Vagina (tissue), 2 donors: ENCODE measurements at regions of chr16 and their contacts with region 1.

Region 1: DNA sequence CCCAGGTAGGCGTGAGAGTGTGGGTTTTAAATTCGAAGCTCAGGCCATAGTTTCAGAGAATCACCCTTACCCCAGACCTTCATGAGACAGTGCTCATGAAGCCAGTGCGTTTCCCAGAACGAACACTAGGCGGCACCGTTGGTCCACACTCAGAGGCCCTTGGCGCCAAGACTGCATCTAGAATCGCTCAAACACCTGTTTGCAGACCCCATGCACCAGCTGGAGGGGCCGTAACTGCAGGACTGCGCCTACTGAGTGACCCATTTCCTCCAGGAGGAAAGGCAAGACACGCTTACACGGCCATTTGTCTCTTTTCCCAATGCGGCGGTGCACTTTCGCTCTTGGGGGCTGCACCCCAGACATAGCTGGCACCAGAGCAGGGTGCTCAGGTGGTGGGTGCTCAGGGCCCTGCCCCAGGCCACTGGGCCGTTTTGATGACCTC is 34.0 kb downstream of the ADGRG5 start:
- DNase-seq: peak in 1 of 2 donors; percentile 64
- H3K4me3 ChIP-seq: no peak overlapping the region
- H3K27ac ChIP-seq: no peak overlapping the region
- H3K4me1 ChIP-seq: peaks cover 5% of the 10 kb centered on the region
- H3K27me3 ChIP-seq: no peaks in the 10 kb centered on the region
- CTCF ChIP-seq: peak; percentile 77 to 83 (median 80)
- POLR2A ChIP-seq: no peak

Region 2: GRCh38 chr16:57639172-57639887 is 62.9 kb after region 1 on chr16:
- intact Hi-C with region 1: no loop called
- DNase-seq: no peak
- H3K4me3 ChIP-seq: no peak overlapping the region
- H3K27ac ChIP-seq: peak overlapping the region; percentile 34
- H3K4me1 ChIP-seq: peaks cover 56% of the 10 kb centered on the region
- H3K27me3 ChIP-seq: no peaks in the 10 kb centered on the region
- CTCF ChIP-seq: no peak
- POLR2A ChIP-seq: no peak

Region 3: DNA sequence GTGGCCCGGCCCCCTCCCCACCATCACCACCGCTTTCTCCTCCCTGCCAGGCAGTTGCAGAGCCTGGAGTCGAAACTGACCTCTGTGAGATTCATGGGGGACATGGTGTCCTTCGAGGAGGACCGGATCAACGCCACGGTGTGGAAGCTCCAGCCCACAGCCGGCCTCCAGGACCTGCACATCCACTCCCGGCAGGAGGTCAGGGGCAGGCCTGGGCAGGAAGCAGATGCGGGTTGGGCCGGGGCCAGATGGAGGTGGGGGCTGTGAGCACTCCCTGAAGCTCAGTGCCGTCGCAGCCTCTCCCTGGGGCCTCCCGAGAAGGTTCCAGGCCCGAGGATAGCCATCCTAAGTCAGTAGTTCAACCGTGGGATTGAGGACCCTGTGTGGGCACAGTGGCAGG is 77.5 kb after region 1 on chr16:
- intact Hi-C with region 1: loop called (anchors 5 kb)
- DNase-seq: no peak
- H3K4me3 ChIP-seq: no peak overlapping the region
- H3K27ac ChIP-seq: no peak overlapping the region
- H3K4me1 ChIP-seq: peaks cover 4% of the 10 kb centered on the region
- H3K27me3 ChIP-seq: no peaks in the 10 kb centered on the region
- CTCF ChIP-seq: no peak
- POLR2A ChIP-seq: no peak

Region 4: DNA sequence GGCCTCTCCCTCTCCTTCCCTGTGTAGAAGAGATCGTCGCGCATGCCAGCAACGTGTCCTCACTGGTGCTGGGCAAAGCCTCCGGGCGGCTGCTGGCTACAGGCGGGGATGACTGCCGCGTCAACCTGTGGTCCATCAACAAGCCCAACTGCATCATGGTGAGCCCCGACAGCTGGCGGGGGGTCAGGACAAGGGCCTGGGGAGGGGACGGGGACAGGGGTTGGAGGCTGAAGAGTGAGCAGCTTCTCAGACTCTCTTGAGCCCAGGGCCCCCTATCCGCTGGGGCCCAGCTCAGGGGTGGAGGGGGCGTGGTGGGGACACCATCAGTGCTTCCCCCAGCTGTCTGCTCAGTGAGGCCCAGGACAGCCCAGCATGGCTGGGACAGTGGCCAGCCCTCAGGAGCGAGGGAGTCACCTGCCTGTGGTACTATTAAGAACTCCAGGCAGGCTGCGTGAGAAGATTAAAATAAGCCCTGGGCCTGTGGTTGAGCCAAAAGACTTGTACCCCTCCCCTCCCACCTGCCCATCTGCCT is 165.3 kb after region 1 on chr16:
- intact Hi-C with region 1: no loop called
- DNase-seq: no peak
- H3K4me3 ChIP-seq: no peak overlapping the region
- H3K27ac ChIP-seq: no peak overlapping the region
- H3K4me1 ChIP-seq: peaks cover 33% of the 10 kb centered on the region
- H3K27me3 ChIP-seq: no peaks in the 10 kb centered on the region
- CTCF ChIP-seq: no peak
- POLR2A ChIP-seq: no peak